ENCODE measurements at regions of chr6 and their contacts with region 1.

Region 1: DNA sequence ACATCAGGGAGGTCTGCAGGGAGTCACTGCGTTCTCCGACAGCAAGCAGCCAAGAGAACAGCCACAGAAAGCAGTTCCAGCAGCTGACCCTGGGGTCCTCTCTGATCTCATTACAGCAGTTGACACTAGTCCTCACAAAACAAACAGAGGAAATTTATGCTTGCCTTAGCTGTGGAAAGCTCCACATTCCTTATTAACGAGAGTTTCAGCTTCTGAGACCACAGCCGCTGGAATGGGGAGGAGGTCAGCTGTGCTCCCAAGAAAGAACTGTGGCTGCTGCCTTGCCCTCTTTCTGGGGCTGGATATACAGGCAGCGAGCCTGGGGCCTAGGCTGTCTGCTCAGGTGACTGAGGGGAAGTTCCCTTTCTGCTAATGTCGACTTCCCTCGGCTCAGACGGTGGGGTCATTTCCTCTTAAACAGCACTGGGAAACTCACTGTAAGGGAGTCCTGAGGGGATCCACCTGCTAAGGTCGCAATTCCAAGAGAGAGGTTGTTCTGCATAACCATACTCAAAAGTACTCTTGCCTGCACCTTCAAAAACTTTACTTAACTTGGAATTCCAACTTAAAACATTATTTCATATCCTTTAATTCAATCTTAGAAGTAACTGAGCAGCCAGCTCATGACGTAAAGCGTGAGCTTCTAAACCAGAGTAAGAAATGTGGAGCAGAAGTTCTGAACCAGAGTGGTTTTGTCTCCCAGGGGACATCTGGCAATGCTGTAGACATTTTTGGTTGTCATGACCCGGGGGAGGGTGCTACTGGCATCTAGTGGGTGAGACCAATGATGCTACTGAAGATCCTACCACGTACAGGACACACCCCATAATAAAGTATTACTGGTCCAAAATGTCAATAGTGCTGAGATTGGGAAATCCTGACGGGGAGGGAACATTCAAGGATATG is 80.3 kb downstream of the BACH2 start:
- DNase-seq: no peak
- H3K4me3 ChIP-seq: no peak overlapping the region
- H3K27ac ChIP-seq: peak overlapping the region in 3 of 4 donors; percentile 7 to 90 (median 26)
- H3K4me1 ChIP-seq: peaks cover 0 to 33% (median 21%) of the 10 kb centered on the region in 4 donors
- H3K27me3 ChIP-seq: no peaks in the 10 kb centered on the region
- CTCF ChIP-seq: no peak
- EP300 ChIP-seq: no peak
- POLR2A ChIP-seq: no peak

Region 2: GRCh38 chr6:90098001-90098531 is 118.3 kb before region 1 on chr6:
- intact Hi-C with region 1: loop called (anchors 10 kb)
- DNase-seq: peak; percentile 82
- H3K4me3 ChIP-seq: no peak overlapping the region
- H3K27ac ChIP-seq: peak overlapping the region; percentile 53 to 81 (median 74)
- H3K4me1 ChIP-seq: peaks cover 0 to 22% (median 19%) of the 10 kb centered on the region in 4 donors
- H3K27me3 ChIP-seq: no peaks in the 10 kb centered on the region
- CTCF ChIP-seq: peak in 1 of 4 experiments; percentile 9
- EP300 ChIP-seq: peak in 1 of 4 donors; percentile 27
- POLR2A ChIP-seq: no peak

Region 3: GRCh38 chr6:90369024-90369519 is 152.7 kb after region 1 on chr6:
- intact Hi-C with region 1: loop called (anchors 1 kb)
- DNase-seq: peak; percentile 88
- H3K4me3 ChIP-seq: no peak overlapping the region
- H3K27ac ChIP-seq: peak overlapping the region; percentile 72 to 83 (median 80)
- H3K4me1 ChIP-seq: peaks cover 0 to 19% (median 17%) of the 10 kb centered on the region in 4 donors
- H3K27me3 ChIP-seq: no peaks in the 10 kb centered on the region
- CTCF ChIP-seq: no peak
- EP300 ChIP-seq: peak in 2 of 4 donors; percentile 72 to 81
- POLR2A ChIP-seq: no peak

Region 4: DNA sequence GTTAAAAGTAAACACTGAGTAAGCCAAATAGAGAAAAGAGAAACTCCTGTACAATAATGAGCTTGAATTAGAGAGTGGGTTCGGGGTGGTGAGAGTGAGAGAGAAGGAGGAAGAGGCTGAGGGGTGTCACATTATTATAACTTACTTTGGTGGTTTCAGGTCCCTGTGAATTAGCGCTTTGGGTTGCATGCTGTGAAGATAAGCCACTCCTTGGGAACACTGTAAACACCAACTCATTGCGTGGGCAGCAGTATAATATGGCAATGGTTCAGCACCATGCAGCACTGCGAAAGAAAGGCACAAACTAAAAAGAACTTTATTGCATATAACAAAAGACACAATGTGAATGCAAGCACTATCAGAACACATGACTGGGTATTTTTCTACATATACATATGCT is 343.6 kb after region 1 on chr6:
- intact Hi-C with region 1: no loop called
- DNase-seq: no peak
- H3K4me3 ChIP-seq: no peak overlapping the region
- H3K27ac ChIP-seq: no peak overlapping the region
- H3K4me1 ChIP-seq: no peaks in the 10 kb centered on the region
- H3K27me3 ChIP-seq: no peaks in the 10 kb centered on the region
- CTCF ChIP-seq: no peak
- EP300 ChIP-seq: no peak
- POLR2A ChIP-seq: no peak